Calu3 (cell line): ENCODE measurements at regions of chrX and their contacts with region 1.

Region 1: GRCh38 chrX:136028251-136028984 is 43.2 kb downstream of the SLC9A6 start:
- DNase-seq: peak; percentile 2
- H3K4me3 Mint-ChIP-seq: no peak overlapping the region
- H3K27ac Mint-ChIP-seq: no peak overlapping the region
- H3K4me1 Mint-ChIP-seq: no peaks in the 10 kb centered on the region
- H3K27me3 Mint-ChIP-seq: no peaks in the 10 kb centered on the region
- CTCF ChIP-seq: no peak

Region 2: GRCh38 chrX:136162831-136163570 is 134.6 kb after region 1 on chrX:
- CTCF ChIA-PET with region 1: interaction called, 36 read pairs
- intact Hi-C with region 1: loop called (anchors 2 kb)
- DNase-seq: peak; percentile 63
- H3K4me3 Mint-ChIP-seq: no peak overlapping the region
- H3K27ac Mint-ChIP-seq: no peak overlapping the region
- H3K4me1 Mint-ChIP-seq: peaks cover 9% of the 10 kb centered on the region
- H3K27me3 Mint-ChIP-seq: peaks cover 54% of the 10 kb centered on the region
- CTCF ChIP-seq: peak; percentile 52

Region 3: DNA sequence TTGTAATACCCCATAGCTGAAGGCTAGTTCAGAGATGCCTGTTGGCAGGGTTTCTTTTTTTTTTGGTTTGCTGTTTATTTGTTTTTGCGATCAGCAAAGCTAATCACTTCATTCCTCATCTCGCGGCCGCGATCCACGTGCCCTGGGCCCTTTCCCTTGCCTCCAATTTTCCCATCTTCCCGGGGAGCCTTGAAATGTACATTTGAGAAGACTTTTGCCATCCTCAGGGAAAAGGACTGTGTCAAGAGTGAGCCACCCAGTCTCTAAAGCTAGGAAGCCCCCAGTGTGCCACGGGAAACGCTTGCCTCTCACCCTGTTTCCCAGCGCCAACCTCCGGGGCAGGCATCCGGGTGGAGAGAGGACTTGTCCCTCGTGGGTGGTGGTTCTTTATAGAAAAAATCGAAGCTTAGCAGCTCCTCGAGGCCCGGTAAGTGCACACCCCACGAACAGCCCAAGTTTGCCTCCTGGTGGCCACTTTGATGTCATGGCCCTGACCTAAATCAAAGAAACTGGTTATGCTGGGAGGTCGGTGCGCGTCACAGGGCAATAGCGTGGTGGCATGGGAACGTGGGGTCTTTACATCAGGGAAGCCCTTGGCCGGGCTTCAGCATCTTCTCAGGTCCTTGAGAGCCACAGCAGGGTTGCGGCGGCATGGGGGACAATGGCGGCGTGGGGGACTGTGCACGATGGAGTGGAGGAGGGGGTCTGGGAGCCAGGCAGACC is 180.8 kb after region 1 on chrX:
- CTCF ChIA-PET with region 1: interaction called, 19 read pairs
- intact Hi-C with region 1: loop called (anchors 2 kb)
- DNase-seq: peak; percentile 56
- H3K4me3 Mint-ChIP-seq: no peak overlapping the region
- H3K27ac Mint-ChIP-seq: no peak overlapping the region
- H3K4me1 Mint-ChIP-seq: peaks cover 19% of the 10 kb centered on the region
- H3K27me3 Mint-ChIP-seq: peaks cover 8% of the 10 kb centered on the region
- CTCF ChIP-seq: peak; percentile 61

Region 4: DNA sequence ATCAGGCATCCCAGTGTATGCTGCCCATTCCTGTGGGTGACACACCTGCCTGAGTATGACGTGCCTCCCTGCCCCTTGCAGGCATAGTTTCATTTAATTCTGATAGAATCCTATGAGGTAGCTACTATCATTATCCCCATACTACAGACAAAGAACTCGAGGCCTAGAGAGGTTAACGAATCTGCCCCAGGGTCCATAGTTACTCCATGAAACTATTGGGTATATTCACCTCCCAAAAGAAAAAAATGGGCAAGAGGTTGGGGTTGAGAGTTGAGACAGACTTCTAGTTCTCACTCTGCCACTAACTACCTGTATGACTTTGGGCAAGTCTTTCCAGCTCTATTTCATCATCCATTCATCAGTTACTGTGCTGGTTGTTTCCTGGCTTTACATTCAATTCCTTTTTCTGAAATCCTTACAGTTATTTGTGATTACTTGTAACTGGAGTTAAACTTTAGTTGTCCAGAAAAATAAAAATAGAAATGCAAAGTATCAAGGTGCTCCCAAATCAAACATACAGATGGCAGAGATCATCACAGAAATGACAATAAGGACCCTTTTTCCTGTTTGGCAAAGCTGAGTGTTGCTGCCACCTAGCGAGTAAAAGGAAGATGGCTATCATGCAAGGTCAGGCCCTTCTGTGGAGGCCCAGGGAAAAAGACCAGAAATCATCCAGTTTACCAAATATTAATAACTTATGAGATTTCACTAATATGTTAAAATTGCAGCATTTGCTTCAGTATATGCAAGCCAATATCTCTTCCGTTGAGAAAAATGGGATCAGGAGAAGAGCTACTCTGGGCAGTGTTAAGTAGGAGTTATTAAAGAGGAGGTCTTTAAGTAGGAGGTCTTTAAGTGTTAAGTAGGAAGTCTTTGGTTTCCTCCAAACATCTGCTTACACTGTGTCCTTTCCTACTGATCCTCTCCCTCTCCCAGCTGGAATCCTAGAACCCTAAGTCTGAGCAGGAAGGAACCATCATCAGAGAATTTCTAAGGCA is 239.9 kb after region 1 on chrX:
- CTCF ChIA-PET with region 1: interaction called, 10 read pairs
- intact Hi-C with region 1: loop called (anchors 1 kb)
- DNase-seq: peak; percentile 43
- H3K4me3 Mint-ChIP-seq: no peak overlapping the region
- H3K27ac Mint-ChIP-seq: no peak overlapping the region
- H3K4me1 Mint-ChIP-seq: no peaks in the 10 kb centered on the region
- H3K27me3 Mint-ChIP-seq: no peaks in the 10 kb centered on the region
- CTCF ChIP-seq: peak; percentile 39

Region 5: DNA sequence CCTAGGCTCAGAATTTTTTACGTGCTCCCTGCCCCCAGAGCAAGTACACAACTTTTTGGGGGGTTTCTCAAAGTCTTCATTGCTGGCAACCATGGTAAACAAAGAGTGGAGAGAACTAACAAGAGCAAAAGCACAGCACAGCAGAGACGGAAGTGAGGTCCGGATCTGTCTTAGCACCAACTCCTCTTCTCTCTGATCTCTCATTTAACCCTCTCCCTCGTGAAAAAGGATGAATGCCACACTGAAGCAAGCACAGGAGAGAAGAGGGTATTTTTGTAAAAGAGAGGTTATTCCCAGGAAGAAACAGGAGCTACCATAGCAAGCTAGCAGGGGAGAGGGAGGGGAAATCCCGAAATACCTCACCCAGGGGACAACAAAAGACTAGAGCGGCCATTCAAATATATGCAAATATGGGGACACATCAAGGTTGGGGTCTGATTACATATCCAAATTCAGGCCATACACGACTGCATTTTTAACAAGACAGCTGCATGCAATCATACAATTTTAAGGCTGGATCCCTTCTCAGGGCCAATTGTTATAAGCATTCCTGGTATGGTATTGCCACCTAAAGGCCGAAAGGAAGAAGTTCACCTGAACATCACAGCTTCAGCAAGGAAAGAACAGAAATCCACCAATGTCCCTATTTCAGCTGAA is 666.1 kb after region 1 on chrX:
- CTCF ChIA-PET with region 1: interaction called, 4 read pairs
- intact Hi-C with region 1: loop called (anchors 10 kb)
- DNase-seq: peak; percentile 12
- H3K4me3 Mint-ChIP-seq: no peak overlapping the region
- H3K27ac Mint-ChIP-seq: no peak overlapping the region
- H3K4me1 Mint-ChIP-seq: peaks cover 19% of the 10 kb centered on the region
- H3K27me3 Mint-ChIP-seq: no peaks in the 10 kb centered on the region
- CTCF ChIP-seq: peak; percentile 61